HEK293 (cell line): ENCODE measurements at regions of chr18 and their contacts with region 1.

Region 1: DNA sequence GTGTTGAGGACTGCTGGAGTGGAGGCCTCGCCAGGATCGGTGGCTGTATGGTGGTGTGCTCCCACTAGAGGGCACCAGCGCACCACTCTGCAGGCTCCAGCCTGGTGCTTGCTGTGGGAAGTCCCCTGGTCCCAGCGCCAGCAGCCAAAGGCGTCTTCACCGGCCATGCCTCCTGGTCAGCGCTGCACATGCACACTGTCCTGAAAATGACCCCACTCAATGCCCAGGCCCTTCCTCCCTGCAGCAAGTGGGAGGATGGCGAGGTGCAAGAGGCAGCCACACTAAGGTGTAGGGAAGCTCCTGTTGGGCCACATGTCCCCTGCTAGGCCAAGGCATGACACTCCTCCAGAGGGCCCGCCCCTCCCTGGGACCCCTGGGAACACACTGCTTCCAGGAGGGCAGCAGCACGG is 136.5 kb downstream of the CTIF start:
- H3K4me3 ChIP-seq: no peak overlapping the region
- H3K27ac ChIP-seq: no peak overlapping the region
- H3K4me1 ChIP-seq: no peaks in the 10 kb centered on the region
- CTCF ChIP-seq: peak; percentile 99

Region 2: DNA sequence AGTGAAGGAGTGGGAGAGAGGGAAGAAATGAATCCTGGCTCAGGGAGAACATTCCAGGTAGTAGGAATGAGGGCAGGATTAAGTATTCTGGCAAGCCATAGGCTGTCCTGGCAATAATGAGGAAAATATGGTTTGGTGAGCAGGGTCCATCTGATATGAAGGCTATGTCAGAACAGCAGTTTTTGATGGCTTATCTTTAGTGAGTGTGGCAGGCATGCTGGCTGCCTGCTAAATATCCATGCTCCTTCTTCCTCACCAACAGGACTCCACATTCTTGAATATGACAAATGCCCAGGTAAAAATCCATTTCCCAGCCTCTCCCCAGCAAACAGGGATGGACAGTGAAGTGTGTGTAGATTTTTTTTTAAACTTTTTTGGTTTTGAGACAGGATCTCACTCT is 149.7 kb before region 1 on chr18:
- CTCF ChIA-PET with region 1: no interaction called
- POLR2A ChIA-PET with region 1: no interaction called
- H3K4me3 ChIP-seq: no peak overlapping the region
- H3K27ac ChIP-seq: no peak overlapping the region
- H3K4me1 ChIP-seq: no peaks in the 10 kb centered on the region
- CTCF ChIP-seq: no peak

Region 3: DNA sequence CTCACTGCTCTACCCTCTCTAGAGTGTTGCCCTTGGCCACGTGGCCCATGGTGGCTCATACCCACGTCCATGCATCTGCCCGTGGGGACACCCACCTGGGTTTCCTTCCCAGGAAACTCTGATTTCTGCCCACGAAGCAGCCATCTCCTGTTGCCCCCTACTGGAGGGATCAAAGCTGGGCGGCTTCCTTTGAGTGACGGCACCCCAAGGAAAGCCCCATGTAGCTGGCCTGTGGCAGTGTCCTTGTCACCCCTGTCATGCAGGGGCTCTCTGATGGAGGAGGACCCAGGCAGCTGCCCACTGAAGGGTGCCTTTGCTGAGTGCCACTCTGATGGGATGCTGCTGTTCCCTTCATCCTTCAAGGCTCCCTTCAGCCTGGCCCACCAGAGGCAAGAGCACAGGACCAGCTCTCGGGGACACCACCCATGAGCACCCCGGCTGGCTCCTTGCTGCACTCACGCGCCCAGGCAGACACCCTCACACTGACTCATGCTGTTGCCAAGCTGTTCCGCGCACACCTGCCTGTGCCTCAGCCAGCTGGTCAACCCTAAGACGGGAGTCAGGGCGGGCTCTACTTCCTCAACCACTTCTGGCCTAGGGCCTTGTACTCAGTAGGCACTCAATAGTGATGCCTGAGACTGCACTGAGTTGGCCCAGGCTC is 35.5 kb before region 1 on chr18:
- CTCF ChIA-PET with region 1: no interaction called
- POLR2A ChIA-PET with region 1: no interaction called
- H3K4me3 ChIP-seq: no peak overlapping the region
- H3K27ac ChIP-seq: no peak overlapping the region
- H3K4me1 ChIP-seq: no peaks in the 10 kb centered on the region
- CTCF ChIP-seq: no peak

Region 4: DNA sequence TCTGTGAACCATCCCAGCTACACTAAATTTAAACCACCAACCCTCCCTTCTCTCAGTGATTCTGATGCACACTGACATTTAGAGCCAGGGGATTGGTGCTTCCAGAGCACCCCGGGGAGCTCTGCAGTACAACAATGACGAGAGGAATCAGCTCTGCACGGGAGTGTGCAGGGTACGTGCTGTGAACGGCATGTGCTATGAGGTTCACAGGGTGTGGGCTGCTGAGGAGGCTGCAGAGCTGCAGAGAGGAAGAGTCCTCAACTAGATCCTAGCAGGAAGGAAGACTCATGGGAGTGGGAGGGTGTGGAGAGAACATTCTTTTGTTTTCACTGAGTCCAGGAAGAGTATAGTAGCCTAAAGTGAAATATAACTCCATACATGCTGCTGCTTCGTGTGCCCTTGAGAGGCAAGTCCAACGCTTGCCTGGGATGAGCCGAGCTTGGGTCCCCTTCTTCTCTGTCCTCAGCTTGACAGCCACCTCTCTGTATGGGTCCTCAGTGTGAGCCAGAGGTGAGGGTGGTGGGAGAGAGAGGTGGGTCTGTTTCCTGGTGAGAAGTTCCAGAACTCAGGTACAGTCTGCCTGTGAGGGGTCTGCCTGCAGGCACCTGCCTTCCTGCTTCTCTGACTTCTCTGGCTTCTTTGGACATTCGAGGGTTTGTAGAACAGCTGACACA is 17.8 kb before region 1 on chr18:
- CTCF ChIA-PET with region 1: no interaction called
- POLR2A ChIA-PET with region 1: no interaction called
- H3K4me3 ChIP-seq: no peak overlapping the region
- H3K27ac ChIP-seq: no peak overlapping the region
- H3K4me1 ChIP-seq: peaks cover 14% of the 10 kb centered on the region
- CTCF ChIP-seq: no peak

Region 5: DNA sequence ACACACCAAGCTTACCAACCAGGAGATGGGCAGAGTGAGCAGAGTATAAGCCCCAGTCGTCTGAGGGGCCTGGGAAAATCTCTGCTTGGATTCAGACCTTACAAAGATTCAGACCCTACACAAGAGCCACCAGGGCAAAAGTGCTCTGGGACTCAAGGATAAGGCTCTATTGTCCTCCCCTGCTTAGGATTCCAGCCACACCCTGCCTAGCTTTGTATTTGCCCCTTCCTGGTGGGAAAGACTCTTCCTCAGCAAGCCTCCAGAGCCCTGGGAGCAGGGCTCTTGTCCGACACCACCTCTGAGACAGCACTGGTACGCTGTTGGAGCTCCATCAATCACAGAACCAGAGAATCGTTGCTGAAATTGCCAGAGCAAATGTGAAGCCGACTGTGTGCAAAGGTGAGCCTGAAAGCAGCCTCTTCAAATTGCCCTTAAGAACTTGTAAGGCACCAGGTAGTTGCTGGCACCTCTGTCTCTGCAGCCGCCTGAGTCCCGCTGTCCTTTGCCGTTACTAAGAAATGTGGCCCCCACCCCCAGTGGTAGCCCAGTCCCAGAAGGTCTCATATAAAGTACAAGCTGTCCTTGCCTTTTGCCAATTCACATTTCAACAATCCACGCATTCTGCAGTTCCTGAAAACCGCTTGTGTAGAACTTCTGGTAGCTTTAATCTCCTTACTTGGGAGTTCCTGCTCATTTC is 12.1 kb after region 1 on chr18:
- CTCF ChIA-PET with region 1: interaction called, 11 read pairs
- POLR2A ChIA-PET with region 1: no interaction called
- H3K4me3 ChIP-seq: no peak overlapping the region
- H3K27ac ChIP-seq: no peak overlapping the region
- H3K4me1 ChIP-seq: no peaks in the 10 kb centered on the region
- CTCF ChIP-seq: no peak